WTC11 (cell line): ENCODE measurements at regions of chrX and their contacts with region 1.

Region 1: GRCh38 chrX:104195489-104196084 is 29.3 kb downstream of the FAM199X start:
- DNase-seq: no peak
- ATAC-seq: no peak
- H3K4me3 Mint-ChIP-seq: no peak overlapping the region
- H3K27ac Mint-ChIP-seq: no peak overlapping the region
- H3K4me1 Mint-ChIP-seq: no peaks in the 10 kb centered on the region
- H3K27me3 Mint-ChIP-seq: no peaks in the 10 kb centered on the region
- CTCF ChIP-seq: 0 out of 2 replicates have a peak, but pooled peaks have one; percentile 31

Region 2: GRCh38 chrX:104045642-104046041 is 149.9 kb before region 1 on chrX:
- CTCF ChIA-PET with region 1: no interaction called
- POLR2A ChIA-PET with region 1: no interaction called
- DNase-seq: no peak
- ATAC-seq: no peak
- H3K4me3 Mint-ChIP-seq: no peak overlapping the region
- H3K27ac Mint-ChIP-seq: no peak overlapping the region
- H3K4me1 Mint-ChIP-seq: peaks cover 9% of the 10 kb centered on the region
- H3K27me3 Mint-ChIP-seq: peaks cover 3% of the 10 kb centered on the region
- CTCF ChIP-seq: no peak

Region 3: DNA sequence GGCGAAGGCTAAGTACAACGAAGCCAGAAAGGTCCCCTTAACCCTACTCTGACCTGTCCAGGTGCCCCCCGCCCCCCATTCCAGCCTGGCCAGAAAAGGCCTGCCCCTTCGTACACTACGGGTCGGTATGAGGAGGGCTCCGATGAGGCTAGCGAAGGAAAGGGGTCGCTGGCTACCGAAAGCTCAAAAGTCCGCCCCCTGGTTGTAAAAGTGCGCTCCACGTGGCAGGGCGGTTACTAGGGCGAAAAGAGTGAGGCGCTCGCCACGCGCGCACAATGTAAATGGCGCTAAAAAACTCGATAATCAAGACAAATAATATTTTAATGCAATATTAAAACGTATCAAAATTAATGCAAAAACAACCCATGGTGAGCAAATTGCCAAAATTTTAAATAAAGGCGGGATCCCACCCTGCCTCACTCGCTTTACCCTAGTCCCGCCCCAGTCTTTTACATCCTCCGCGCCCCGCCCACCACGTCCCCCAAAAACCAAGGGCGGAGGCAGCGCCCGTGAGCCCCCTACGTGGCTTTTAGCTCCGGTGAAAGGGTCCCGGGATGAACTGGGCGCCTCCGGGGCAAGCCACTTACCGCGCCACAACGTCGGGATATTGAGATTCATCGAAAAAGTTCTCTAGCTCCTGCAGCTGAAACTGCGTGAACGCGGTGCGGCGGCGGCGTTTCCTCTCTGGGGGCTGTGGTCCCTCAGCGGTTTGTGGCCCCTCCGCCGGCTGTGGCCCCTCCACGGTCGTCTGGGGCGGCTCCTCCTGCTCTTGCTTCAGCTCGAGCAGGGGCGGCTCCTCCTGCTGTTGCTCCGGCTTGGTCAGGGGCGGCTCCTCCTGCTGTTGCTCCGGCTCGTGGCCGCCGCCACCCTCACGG is 58.2 kb after region 1 on chrX:
- CTCF ChIA-PET with region 1: interaction called, 10 read pairs
- POLR2A ChIA-PET with region 1: no interaction called
- DNase-seq: peak; percentile 48
- ATAC-seq: peak; percentile 46
- H3K4me3 Mint-ChIP-seq: peak overlapping the region; percentile 73
- H3K27ac Mint-ChIP-seq: no peak overlapping the region
- H3K4me1 Mint-ChIP-seq: peaks cover 14% of the 10 kb centered on the region
- H3K27me3 Mint-ChIP-seq: peaks cover 97% of the 10 kb centered on the region
- CTCF ChIP-seq: no peak

Region 4: GRCh38 chrX:104270920-104271512 is 75.4 kb after region 1 on chrX:
- CTCF ChIA-PET with region 1: interaction called, 40 read pairs
- POLR2A ChIA-PET with region 1: no interaction called
- DNase-seq: peak; percentile 58
- ATAC-seq: peak; percentile 63
- H3K4me3 Mint-ChIP-seq: no peak overlapping the region
- H3K27ac Mint-ChIP-seq: no peak overlapping the region
- H3K4me1 Mint-ChIP-seq: peaks cover 3% of the 10 kb centered on the region; the same call in 1 of the 2 replicates
- H3K27me3 Mint-ChIP-seq: peaks cover 49% of the 10 kb centered on the region
- CTCF ChIP-seq: no peak

Region 5: GRCh38 chrX:104459796-104460195 is 264.2 kb after region 1 on chrX:
- CTCF ChIA-PET with region 1: no interaction called
- POLR2A ChIA-PET with region 1: no interaction called
- DNase-seq: no peak
- ATAC-seq: no peak
- H3K4me3 Mint-ChIP-seq: no peak overlapping the region
- H3K27ac Mint-ChIP-seq: no peak overlapping the region
- H3K4me1 Mint-ChIP-seq: no peaks in the 10 kb centered on the region
- H3K27me3 Mint-ChIP-seq: no peaks in the 10 kb centered on the region
- CTCF ChIP-seq: no peak